ENCODE measurements at regions of chr4 and their contacts with region 1.

Region 1: DNA sequence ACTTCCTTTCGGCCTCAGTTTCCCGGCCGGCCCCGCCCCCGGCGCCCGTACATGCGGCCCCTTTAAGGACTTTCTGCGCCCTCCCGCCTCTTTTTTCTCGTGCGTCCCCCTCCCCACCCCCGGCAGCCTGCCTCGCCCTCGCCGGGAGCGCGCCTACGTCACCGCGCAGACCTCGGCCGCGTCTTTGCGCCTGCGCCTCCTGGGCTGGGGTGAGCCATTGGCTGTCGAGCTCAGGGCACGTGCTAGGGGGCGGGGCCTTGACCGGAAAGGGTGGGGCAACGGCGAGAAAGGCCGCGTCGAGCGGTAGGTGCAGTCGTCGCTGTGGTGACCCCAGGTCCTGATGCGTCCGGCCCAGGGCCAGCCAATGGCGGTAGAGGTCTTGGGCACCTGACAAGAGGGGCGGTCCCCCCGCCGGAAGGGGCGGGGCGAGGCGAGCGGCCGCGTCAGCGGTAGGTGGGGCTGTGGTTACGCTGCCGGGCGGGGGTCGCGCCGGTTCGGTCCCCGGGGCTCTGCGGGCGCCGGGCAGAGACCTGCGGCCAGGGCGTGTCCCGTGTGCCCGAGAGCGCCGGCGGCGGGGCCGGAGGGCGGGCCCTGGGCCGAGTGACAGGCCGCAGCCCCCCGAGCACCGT is at the start of gene UVSSA:
- DNase-seq: peak; percentile 100
- H3K4me3 ChIP-seq: peak within 1 kb of the TSS; percentile 96 to 99
- H3K27ac ChIP-seq: peak within 1 kb of the TSS; percentile 95 to 100
- H3K4me1 ChIP-seq: peaks cover 13% of the 10 kb centered on the region
- H3K27me3 ChIP-seq: no peaks in the 10 kb centered on the region
- CTCF ChIP-seq: peak in 1 of 4 experiments; percentile 3
- POLR2A ChIP-seq: peak; percentile 85
- total RNA-seq, gene UVSSA: 20.8 to 47.9 TPM

Region 2: DNA sequence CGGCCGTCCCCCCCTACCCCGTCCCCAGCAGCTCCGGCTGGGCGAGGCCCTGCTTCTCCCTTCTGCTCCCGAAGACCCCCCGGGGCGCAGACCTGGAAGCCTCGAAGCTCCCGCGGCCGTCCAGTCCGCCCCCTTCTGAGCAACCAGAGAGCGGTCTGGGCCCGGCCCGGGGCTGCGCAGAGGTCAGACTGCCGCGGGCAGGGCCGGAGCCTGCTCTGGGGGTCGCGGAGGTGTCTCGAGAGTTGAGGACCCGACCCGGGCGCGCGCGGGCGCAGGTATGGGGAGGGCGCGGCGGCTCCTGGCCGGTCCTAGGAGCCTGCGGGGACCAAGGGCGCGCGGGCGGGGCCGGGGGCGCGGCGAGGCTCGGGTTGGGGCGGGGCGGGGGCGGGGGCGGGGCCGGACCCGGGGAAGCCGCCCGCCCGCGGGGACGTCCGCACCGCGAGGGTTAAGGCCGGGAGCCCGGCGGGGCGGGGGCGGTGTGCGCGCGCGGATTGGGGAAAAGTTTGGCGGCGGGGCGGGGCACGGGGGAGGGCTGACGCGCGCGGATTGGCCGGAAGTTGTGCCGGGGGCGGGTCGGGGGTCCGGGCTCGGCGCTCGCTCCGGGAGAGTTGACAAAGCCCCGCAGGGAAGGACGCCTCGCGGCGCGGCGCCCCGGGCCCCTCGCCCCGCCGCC is 335.7 kb before region 1 on chr4 and contains the start of gene FGFRL1:
- intact Hi-C with region 1: loop called (anchors 2 kb)
- DNase-seq: peak; percentile 92
- H3K4me3 ChIP-seq: peak within 1 kb of the TSS; percentile 40 to 49
- H3K27ac ChIP-seq: peak within 1 kb of the TSS; percentile 51 to 68
- H3K4me1 ChIP-seq: peaks cover 8% of the 10 kb centered on the region
- H3K27me3 ChIP-seq: no peaks in the 10 kb centered on the region
- CTCF ChIP-seq: no peak
- POLR2A ChIP-seq: no peak
- total RNA-seq, gene FGFRL1: 26.6 to 29.4 TPM

Region 3: DNA sequence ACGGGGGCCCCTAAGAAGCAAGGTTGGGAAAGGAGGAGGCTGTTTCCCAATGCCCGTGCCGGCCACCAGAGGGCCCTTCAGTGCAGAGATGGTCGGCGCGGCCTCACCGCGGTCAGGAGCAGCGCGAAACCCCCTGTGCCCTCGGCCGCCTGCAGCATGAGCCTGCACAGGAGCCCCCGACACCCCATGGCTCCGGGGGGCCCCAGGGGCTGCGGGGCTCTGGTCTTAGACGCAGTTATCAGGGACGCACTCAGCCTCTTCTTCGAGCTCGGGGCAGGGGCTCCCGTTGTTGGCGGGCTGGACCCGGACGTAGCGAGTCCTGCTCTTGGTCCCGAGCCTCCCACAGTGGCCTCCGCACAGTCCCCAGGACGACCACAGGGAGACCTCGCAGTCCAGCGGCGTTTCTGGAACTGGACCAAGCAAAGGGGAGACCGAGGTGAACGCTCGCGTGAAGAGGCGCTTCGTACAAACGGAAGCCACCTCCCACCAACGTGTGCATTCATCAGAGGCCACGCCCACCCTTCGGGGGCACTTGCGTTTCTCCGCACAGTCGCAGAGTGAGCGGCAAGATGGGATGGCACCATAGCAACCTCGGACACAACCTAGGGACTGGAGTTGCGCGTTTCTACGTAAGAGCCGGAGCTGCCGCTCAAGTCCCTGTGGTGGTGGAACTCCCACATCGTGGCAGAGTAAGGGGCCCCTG is 179.5 kb before region 1 on chr4:
- intact Hi-C with region 1: loop called (anchors 5 kb)
- DNase-seq: peak; percentile 68
- H3K4me3 ChIP-seq: peak overlapping the region; percentile 35 to 42
- H3K27ac ChIP-seq: peak overlapping the region; percentile 63 to 67
- H3K4me1 ChIP-seq: no peaks in the 10 kb centered on the region
- H3K27me3 ChIP-seq: no peaks in the 10 kb centered on the region
- CTCF ChIP-seq: peak; percentile 80 to 94 (median 88)
- POLR2A ChIP-seq: no peak

Region 4: GRCh38 chr4:1249148-1249730 is 97.7 kb before region 1 on chr4:
- intact Hi-C with region 1: loop called (anchors 1 kb)
- DNase-seq: peak; percentile 86
- H3K4me3 ChIP-seq: peak overlapping the region; percentile 65 to 92
- H3K27ac ChIP-seq: peak overlapping the region; percentile 94 to 97
- H3K4me1 ChIP-seq: peaks cover 37% of the 10 kb centered on the region
- H3K27me3 ChIP-seq: no peaks in the 10 kb centered on the region
- CTCF ChIP-seq: no peak
- POLR2A ChIP-seq: peak; percentile 63

Region 5: GRCh38 chr4:1289207-1290164 is 57.4 kb before region 1 on chr4 and contains the start of gene MAEA:
- intact Hi-C with region 1: loop called (anchors 5 kb)
- DNase-seq: peak; percentile 96
- H3K4me3 ChIP-seq: peak within 1 kb of the TSS; percentile 91 to 92
- H3K27ac ChIP-seq: peak within 1 kb of the TSS; percentile 79 to 86
- H3K4me1 ChIP-seq: peaks cover 7% of the 10 kb centered on the region
- H3K27me3 ChIP-seq: no peaks in the 10 kb centered on the region
- CTCF ChIP-seq: peak in 1 of 4 experiments; percentile 3
- POLR2A ChIP-seq: peak; percentile 71
- total RNA-seq, gene MAEA: 76.0 to 110 TPM